Esophagus muscularis mucosa (tissue), 4 donors: ENCODE measurements at regions of chr4 and their contacts with region 1.

Region 1: GRCh38 chr4:16626945-16627344 is 271.5 kb downstream of the LDB2 start:
- DNase-seq: no peak
- H3K4me3 ChIP-seq: no peak overlapping the region
- H3K27ac ChIP-seq: peak overlapping the region in 2 of 4 donors; percentile 19 to 30
- H3K4me1 ChIP-seq: peaks cover 0 to 13% (median 7%) of the 10 kb centered on the region in 4 donors
- H3K27me3 ChIP-seq: no peaks in the 10 kb centered on the region
- CTCF ChIP-seq: no peak
- EP300 ChIP-seq: no peak
- POLR2A ChIP-seq: no peak

Region 2: DNA sequence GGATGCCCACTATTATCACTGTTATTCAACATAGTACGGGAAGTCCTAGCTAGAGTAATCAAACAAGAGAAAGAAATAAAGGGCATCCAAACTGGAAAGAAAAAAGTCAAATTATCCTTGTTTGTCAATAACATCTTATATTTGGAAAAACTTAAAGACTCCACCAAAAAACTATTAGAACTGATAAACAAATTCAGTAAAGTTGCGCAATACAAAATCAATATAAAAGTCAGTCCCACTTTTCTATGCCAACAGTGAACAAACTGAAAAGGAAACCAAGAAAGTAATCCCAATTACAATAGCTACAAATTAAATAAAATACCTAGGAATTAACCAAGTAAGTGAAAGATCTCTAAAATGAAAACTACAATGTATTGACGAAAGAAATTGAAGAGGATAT is 49.8 kb before region 1 on chr4:
- intact Hi-C with region 1: loop called (anchors 2 kb)
- DNase-seq: no peak
- H3K4me3 ChIP-seq: no peak overlapping the region
- H3K27ac ChIP-seq: no peak overlapping the region
- H3K4me1 ChIP-seq: peaks cover 14 to 18% (median 14%) of the 10 kb centered on the region in 4 donors
- H3K27me3 ChIP-seq: no peaks in the 10 kb centered on the region
- CTCF ChIP-seq: no peak
- EP300 ChIP-seq: no peak
- POLR2A ChIP-seq: no peak

Region 3: GRCh38 chr4:16843831-16844508 is 217.0 kb after region 1 on chr4:
- intact Hi-C with region 1: no loop called
- DNase-seq: no peak
- H3K4me3 ChIP-seq: no peak overlapping the region
- H3K27ac ChIP-seq: no peak overlapping the region
- H3K4me1 ChIP-seq: peaks cover 11 to 16% (median 13%) of the 10 kb centered on the region in 4 donors
- H3K27me3 ChIP-seq: no peaks in the 10 kb centered on the region
- CTCF ChIP-seq: no peak
- EP300 ChIP-seq: no peak
- POLR2A ChIP-seq: no peak